HCT116 (cell line): ENCODE measurements at regions of chr20 and their contacts with region 1.

Region 1: GRCh38 chr20:22974353-22974752 is 60.8 kb upstream of the SSTR4 start:
- DNase-seq: peak; percentile 18
- ATAC-seq: peak; percentile 78
- H3K4me3 ChIP-seq: no peak overlapping the region
- H3K27ac ChIP-seq: no peak overlapping the region
- H3K4me1 ChIP-seq: no peaks in the 10 kb centered on the region
- H3K27me3 ChIP-seq: peaks cover 50% of the 10 kb centered on the region
- CTCF ChIP-seq: peak; percentile 38 to 69 (median 66); a peak in 5 of 6 replicates
- POLR2A ChIP-seq: no peak
- RAD21 ChIP-seq: peak; percentile 47

Region 2: GRCh38 chr20:22846863-22847262 is 127.5 kb before region 1 on chr20:
- CTCF ChIA-PET with region 1: interaction called, 12 read pairs
- POLR2A ChIA-PET with region 1: no interaction called
- RAD21 ChIA-PET with region 1: no interaction called
- intact Hi-C with region 1: no loop called
- DNase-seq: no peak
- ATAC-seq: no peak
- H3K4me3 ChIP-seq: no peak overlapping the region
- H3K27ac ChIP-seq: no peak overlapping the region
- H3K4me1 ChIP-seq: no peaks in the 10 kb centered on the region
- H3K27me3 ChIP-seq: peaks cover 27% of the 10 kb centered on the region
- CTCF ChIP-seq: no peak
- POLR2A ChIP-seq: no peak
- RAD21 ChIP-seq: no peak

Region 3: GRCh38 chr20:22984606-22985005 is 10.3 kb after region 1 on chr20:
- CTCF ChIA-PET with region 1: interaction called, 10 read pairs
- POLR2A ChIA-PET with region 1: no interaction called
- RAD21 ChIA-PET with region 1: no interaction called
- intact Hi-C with region 1: no loop called
- DNase-seq: no peak
- ATAC-seq: no peak
- H3K4me3 ChIP-seq: no peak overlapping the region
- H3K27ac ChIP-seq: no peak overlapping the region
- H3K4me1 ChIP-seq: no peaks in the 10 kb centered on the region
- H3K27me3 ChIP-seq: peaks cover 41% of the 10 kb centered on the region
- CTCF ChIP-seq: no peak
- POLR2A ChIP-seq: no peak
- RAD21 ChIP-seq: no peak